ENCODE measurements at regions of chr17 and their contacts with region 1.

Region 1: DNA sequence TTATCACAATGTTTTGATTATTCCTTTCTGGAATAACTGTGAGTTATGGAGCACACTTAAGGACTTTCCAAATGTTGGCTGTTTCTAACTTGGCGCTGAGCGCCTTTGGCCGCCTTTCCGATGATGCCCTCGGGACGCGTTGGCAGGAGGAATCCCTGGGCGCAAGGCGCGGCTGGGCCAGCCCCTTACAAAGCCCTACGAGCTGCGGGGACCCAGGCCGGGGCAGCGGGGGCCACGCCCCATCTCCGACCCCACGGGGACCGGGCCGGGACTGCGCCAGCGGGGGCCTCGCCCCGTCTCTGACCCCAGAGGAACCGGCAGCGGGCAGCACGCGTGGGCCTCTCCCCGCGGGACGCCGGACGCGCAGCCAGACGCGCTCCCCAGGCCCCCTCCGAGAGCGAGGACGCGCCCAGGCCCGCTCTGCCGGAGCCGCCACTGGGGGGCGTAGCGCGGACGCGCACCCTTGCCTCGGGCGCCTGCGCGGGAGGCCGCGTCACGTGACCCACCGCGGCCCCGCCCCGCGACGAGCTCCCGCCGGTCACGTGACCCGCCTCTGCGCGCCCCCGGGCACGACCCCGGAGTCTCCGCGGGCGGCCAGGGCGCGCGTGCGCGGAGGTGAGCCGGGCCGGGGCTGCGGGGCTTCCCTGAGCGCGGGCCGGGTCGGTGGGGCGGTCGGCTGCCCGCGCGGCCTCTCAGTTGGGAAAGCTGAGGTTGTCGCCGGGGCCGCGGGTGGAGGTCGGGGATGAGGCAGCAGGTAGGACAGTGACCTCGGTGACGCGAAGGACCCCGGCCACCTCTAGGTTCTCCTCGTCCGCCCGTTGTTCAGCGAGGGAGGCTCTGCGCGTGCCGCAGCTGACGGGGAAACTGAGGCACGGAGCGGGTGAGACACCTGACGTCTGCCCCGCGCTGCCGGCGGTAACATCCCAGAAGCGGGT is at the start of gene GAA:
- DNase-seq: peak; percentile 81 to 86
- H3K4me3 ChIP-seq: peak within 1 kb of the TSS; percentile 45 to 93 (median 66)
- H3K27ac ChIP-seq: peak within 1 kb of the TSS; percentile 78 to 90 (median 90)
- H3K4me1 ChIP-seq: peaks cover 10 to 20% of the 10 kb centered on the region in 2 donors
- H3K27me3 ChIP-seq: no peaks in the 10 kb centered on the region
- CTCF ChIP-seq: peak in 5 of 6 experiments; percentile 29 to 96 (median 94)
- POLR2A ChIP-seq: peak in 1 of 2 donors; percentile 71
- total RNA-seq, gene GAA: 42.1 to 131 (median 83.2) TPM

Region 2: DNA sequence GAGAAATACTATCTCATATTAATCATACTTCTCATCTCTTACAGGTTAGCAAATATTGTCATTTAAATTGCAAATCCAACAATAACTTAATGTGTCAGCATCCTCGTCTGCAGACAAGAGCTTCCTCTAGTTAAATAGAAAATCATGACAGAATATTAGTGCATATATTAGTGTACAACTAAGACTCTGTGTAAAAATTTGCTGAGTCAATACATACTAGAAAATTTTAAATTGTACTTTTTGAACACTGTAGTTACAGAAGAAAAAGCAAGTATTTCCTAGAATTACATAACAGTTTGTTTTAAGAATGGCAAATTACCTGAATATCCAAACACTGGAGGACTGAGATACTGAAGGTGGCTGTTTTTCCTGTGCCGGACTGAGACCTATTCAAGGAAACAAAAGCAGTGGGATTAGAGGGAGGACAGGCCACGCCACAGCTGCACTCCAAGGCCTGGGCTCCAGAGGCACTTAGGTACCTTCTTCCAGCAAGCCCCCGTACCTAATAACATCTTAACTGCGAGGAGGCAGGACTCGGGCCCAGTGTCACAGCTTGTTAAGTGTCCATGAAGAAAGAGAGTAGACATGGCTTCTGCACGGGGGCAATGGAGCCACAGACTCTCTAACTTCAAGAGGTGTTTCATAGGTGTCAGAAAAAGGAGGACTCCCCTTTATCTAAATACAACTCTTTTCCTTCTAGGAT is 40.3 kb after region 1 on chr17:
- intact Hi-C with region 1: loop called (anchors 5 kb)
- DNase-seq: no peak
- H3K4me3 ChIP-seq: no peak overlapping the region
- H3K27ac ChIP-seq: no peak overlapping the region
- H3K4me1 ChIP-seq: peaks cover 17 to 18% of the 10 kb centered on the region in 2 donors
- H3K27me3 ChIP-seq: no peaks in the 10 kb centered on the region
- CTCF ChIP-seq: no peak
- POLR2A ChIP-seq: no peak